ENCODE measurements at regions of chr17 and their contacts with region 1.

Region 1: GRCh38 chr17:44444735-44445105 is 55.3 kb upstream of the ITGA2B start:
- DNase-seq: no peak
- H3K4me3 ChIP-seq: no peak overlapping the region
- H3K27ac ChIP-seq: no peak overlapping the region
- H3K4me1 ChIP-seq: no peaks in the 10 kb centered on the region
- H3K27me3 ChIP-seq: no peaks in the 10 kb centered on the region
- CTCF ChIP-seq: no peak
- EP300 ChIP-seq: no peak
- POLR2A ChIP-seq: no peak
- RAD21 ChIP-seq: no peak

Region 2: DNA sequence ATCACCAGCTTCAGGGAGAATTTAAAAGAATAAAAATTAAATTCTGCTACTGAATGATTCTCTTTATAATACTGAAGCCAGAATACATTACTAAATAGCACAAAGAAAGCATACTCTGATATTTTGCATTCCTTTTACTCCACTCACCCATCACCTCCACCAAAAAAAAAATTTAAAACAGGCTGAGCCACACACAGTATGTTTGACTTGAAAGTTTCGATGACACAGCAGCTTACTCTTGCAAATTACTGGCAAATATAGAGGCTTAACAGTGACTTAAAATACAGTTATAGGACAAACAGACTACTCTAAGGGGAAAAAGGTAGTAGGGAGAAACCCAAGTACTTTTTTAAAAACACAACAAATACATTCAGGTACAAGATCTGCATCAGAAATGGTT is 19.3 kb after region 1 on chr17:
- CTCF ChIA-PET with region 1: interaction called, 12 read pairs
- POLR2A ChIA-PET with region 1: no interaction called
- DNase-seq: no peak
- H3K4me3 ChIP-seq: no peak overlapping the region
- H3K27ac ChIP-seq: no peak overlapping the region
- H3K4me1 ChIP-seq: no peaks in the 10 kb centered on the region; a peak in 1 of 7 replicates
- H3K27me3 ChIP-seq: no peaks in the 10 kb centered on the region
- CTCF ChIP-seq: no peak
- EP300 ChIP-seq: no peak
- POLR2A ChIP-seq: no peak
- RAD21 ChIP-seq: no peak

Region 3: GRCh38 chr17:44473367-44473766 is 28.6 kb after region 1 on chr17:
- CTCF ChIA-PET with region 1: interaction called, 12 read pairs
- POLR2A ChIA-PET with region 1: no interaction called
- DNase-seq: no peak
- H3K4me3 ChIP-seq: no peak overlapping the region
- H3K27ac ChIP-seq: no peak overlapping the region
- H3K4me1 ChIP-seq: no peaks in the 10 kb centered on the region
- H3K27me3 ChIP-seq: no peaks in the 10 kb centered on the region
- CTCF ChIP-seq: no peak
- EP300 ChIP-seq: no peak
- POLR2A ChIP-seq: no peak
- RAD21 ChIP-seq: no peak

Region 4: DNA sequence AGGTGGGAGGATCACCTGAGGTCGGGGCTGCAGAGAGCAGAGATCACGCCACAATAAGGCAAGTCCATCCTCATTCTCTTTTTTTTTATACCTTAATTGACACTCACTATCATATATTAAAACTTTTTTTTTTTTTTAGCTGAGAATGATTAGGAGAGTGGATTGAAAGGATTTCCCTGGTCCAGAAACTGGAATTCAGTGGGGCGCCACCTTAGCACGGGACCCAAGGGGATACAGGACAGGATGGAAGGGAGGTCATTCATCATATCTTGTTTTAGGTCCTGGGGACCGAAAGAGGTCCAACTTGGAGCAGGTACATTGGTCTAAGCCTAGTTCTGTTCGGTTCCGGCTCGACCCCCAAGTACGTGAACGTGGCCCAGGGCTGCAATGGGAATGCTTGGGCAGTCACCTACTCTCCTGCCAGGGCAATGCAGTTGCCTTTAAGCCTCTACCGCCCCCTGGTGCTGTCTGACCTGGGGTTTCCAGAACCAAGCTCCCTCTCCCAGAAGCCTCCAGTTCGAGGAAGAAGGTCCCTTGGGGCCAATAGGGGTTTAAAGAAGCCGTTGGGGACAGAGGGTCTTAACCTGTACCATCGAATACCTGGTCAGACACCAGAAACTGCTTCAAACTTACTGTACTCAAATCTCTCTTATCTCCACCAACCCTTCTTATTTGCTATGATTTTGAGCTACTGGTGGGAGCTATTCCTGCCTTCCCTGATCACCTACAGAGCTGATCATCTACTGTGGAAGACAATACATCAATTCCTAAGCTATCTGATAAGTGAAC is 78.4 kb after region 1 on chr17:
- CTCF ChIA-PET with region 1: interaction called, 28 read pairs
- POLR2A ChIA-PET with region 1: no interaction called
- DNase-seq: peak in 1 of 2 experiments; percentile 94
- H3K4me3 ChIP-seq: no peak overlapping the region
- H3K27ac ChIP-seq: no peak overlapping the region
- H3K4me1 ChIP-seq: no peaks in the 10 kb centered on the region
- H3K27me3 ChIP-seq: no peaks in the 10 kb centered on the region
- CTCF ChIP-seq: peak; percentile 81 to 87 (median 83)
- EP300 ChIP-seq: no peak
- POLR2A ChIP-seq: no peak
- RAD21 ChIP-seq: peak; percentile 90 to 92

Measured in H1 (cell line).